Sciatic nerve (tissue), 2 donors: ENCODE measurements at regions of chr12 and their contacts with region 1.

Region 1: GRCh38 chr12:22544038-22544979 is at the start of gene C2CD5:
- DNase-seq: peak; percentile 99
- ATAC-seq: peak; percentile 98
- total RNA-seq, gene C2CD5: 53.4 TPM

Region 2: DNA sequence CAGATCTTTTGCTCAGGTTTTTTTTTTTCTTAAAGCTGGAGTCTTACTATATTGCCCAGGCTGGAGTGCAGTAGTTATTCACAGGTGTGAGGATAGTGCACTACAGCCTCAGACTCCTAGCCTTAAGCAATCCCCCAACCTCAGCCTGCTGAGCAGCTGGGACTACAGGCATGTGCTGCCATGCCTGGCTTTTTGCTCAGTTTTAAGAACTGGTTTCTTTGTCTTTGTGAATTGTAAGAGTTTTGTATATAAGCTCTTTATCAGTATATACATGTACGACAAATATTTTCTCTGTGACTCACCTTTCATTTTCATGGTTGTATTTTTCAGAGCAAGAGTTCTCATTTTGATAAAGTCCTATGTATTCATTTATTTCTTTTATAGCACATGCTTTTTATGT is 33.4 kb after region 1 on chr12:
- intact Hi-C with region 1: no loop called
- DNase-seq: no peak
- ATAC-seq: no peak

Region 3: GRCh38 chr12:22624870-22625761 is 80.8 kb after region 1 on chr12 and contains the start of gene ETNK1:
- intact Hi-C with region 1: loop called (anchors 10 kb)
- DNase-seq: peak; percentile 98
- ATAC-seq: peak; percentile 100
- total RNA-seq, gene ETNK1: 69.6 TPM